ENCODE measurements at regions of chr2 and their contacts with region 1.

Region 1: DNA sequence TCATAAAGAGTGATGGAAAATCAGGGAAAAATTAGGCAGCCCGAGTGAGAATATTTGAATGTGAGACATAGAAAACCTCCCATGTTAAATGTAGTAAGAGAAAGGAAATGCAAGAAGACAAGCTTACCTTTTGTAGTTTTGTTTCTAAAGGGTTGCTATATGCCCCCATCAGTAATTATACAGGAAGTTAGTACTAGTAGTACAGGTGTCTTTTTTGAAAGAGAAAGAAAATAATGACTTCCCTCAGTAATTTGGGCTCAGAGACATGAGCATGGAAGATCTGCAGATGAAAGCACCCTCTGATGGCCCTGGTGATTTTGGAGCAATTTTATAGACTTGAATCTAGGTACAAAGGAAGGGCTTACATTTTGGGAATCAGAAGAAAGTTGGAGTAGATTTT is 80.8 kb downstream of the RHBDD1 start:
- DNase-seq: no peak
- H3K4me3 ChIP-seq: no peak overlapping the region
- H3K27ac ChIP-seq: no peak overlapping the region
- H3K4me1 ChIP-seq: peaks cover 22% of the 10 kb centered on the region
- H3K27me3 ChIP-seq: no peaks in the 10 kb centered on the region
- CTCF ChIP-seq: no peak

Region 2: DNA sequence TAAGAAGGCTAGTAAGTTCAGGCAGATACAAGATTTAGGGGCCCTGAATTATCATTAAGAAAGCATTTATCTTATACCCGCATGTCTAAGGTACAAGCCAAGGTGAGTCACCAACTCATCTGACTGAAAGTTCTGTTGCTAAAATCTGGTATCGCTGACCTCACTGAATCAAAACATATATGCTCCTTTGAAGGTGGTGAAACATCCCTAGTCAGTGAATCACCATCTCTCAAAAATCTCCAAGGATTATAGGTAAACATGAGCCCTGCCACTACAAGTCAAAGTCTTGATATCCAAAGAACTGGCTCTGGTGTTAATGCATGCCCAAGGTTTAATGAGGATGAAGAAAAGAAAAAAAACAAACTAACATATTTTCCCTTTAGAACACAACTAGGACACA is 160.5 kb before region 1 on chr2:
- CTCF ChIA-PET with region 1: no interaction called
- dilution Hi-C with region 1: no loop called
- in situ Hi-C with region 1: no loop called
- intact Hi-C with region 1: no loop called
- DNase-seq: peak; percentile 99
- H3K4me3 ChIP-seq: no peak overlapping the region
- H3K27ac ChIP-seq: peak overlapping the region; percentile 97
- H3K4me1 ChIP-seq: peaks cover 45% of the 10 kb centered on the region
- H3K27me3 ChIP-seq: no peaks in the 10 kb centered on the region
- CTCF ChIP-seq: no peak

Region 3: DNA sequence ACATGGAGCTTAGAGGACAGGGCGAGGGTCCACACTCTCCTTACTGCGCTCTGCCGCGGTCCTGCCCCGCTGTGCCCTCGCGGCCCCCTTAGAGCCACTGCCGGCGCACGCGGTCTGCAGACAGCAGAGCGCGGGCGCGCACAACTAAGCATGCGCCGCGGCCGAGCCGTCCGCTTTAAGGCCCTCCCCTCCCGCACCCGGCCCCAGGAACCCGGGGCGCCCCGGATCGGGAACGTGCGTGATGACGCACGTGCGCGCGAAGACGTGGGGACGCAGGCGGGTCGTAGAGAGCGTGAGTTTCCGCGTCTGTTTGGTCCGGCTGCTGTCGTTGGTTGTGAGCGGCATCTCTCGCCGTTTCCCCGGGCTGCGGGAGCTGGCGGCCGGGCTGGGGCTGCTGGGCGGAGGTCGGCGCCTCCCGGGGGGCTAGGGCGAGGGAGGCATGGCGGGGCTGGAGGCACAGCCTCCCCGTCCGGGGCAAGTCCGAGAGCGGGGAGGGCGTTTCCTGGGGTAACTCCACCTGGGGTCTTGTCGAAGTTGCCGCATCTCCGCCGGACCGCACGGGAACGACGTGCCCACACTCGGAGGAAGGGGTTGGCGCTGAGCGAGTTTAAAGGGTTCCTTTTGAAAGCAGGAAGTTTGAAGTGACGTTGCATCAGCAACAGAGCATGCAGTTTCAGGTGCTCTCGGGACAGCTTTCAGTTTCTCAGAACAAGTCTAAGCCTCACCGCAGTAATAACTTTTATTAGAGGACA is 80.7 kb before region 1 on chr2 and contains the start of gene RHBDD1:
- CTCF ChIA-PET with region 1: no interaction called
- dilution Hi-C with region 1: no loop called
- in situ Hi-C with region 1: no loop called
- intact Hi-C with region 1: loop called (anchors 5 kb)
- DNase-seq: peak; percentile 95
- H3K4me3 ChIP-seq: peak within 1 kb of the TSS; percentile 68 to 79 (median 68)
- H3K27ac ChIP-seq: peak within 1 kb of the TSS; percentile 94
- H3K4me1 ChIP-seq: peaks cover 17% of the 10 kb centered on the region
- H3K27me3 ChIP-seq: no peaks in the 10 kb centered on the region
- CTCF ChIP-seq: no peak
- total RNA-seq, gene RHBDD1: 43.3 to 52.1 TPM

Measured in mammary epithelial cell (primary cell).